Pancreas (tissue), 10 donors: ENCODE measurements at regions of chr11 and their contacts with region 1.

Region 1: GRCh38 chr11:117807482-117808327 is 10.7 kb upstream of the DSCAML1 start:
- DNase-seq: peak in 3 of 6 donors; percentile 75 to 93 (median 80)
- ATAC-seq: peak; percentile 50 to 89 (median 80)
- H3K4me3 ChIP-seq: no peak overlapping the region
- H3K27ac ChIP-seq: no peak overlapping the region
- H3K4me1 ChIP-seq: no peaks in the 10 kb centered on the region
- H3K27me3 ChIP-seq: no peaks in the 10 kb centered on the region
- CTCF ChIP-seq: peak; percentile 78 to 87 (median 85)

Region 2: DNA sequence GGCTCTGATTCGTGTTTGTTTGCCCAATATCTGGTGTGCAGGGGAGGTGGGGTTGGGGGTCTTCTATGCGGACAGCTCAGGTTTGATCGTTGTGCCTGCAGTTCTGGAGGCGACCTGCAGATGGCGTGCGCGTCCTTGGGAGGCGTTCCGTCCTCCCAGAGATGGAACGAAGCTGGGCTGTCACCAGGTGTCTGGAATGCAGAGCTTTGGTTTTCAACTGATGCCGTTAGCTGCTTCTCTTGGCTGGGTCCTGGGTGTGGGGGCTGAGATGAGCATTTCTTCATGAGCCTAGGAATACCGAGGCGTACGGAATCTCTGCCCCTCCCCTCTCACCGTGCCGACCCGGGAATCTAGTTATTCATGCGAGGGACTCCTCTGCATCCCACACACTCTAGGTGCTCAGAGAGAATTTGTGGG is 381.4 kb before region 1 on chr11:
- intact Hi-C with region 1: loop called in 1 of 3 experiments (anchors 10 kb)
- DNase-seq: peak in 5 of 6 donors; percentile 41 to 93 (median 70)
- ATAC-seq: peak; percentile 70 to 93 (median 86)
- H3K4me3 ChIP-seq: no peak overlapping the region
- H3K27ac ChIP-seq: no peak overlapping the region
- H3K4me1 ChIP-seq: no peaks in the 10 kb centered on the region
- H3K27me3 ChIP-seq: no peaks in the 10 kb centered on the region
- CTCF ChIP-seq: peak; percentile 76 to 93 (median 87)

Region 3: DNA sequence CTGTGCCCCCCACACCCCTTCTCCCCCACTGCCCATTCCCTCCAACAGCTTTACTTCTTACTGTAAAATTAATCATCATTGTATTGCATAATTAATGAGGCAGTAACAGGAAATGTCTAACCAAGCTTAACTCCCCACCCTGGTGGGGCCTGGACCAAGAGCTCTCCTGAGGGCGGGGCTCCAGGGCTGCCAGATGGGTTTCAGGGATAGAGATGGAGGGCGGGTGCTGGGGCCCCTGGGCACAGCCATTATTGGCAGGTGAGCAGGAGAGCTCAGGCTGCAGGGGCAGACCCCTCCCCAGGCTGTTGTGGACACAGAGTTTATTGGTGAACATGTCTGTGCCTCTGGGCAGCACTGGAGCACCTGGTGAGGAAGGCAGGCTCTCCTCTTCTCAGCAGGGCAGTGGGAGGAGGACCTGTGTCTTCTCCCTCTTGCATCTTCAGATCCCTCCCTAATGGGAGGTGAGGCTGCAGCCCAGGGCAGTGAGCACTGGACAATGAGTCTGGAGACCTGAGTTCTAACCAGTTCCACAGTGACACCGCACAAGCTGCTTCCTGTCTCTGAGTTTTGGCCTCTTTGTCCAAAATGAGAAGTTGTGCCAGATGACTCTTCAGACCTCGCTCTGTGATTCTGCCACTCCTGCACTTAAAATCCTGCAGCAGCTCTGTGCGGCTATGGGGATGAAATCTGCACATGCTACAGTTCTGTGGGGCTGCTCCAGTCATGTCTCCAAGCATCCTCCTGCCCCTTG is 246.8 kb before region 1 on chr11:
- intact Hi-C with region 1: no loop called
- DNase-seq: peak in 1 of 6 donors; percentile 38
- ATAC-seq: no peak
- H3K4me3 ChIP-seq: no peak overlapping the region
- H3K27ac ChIP-seq: no peak overlapping the region
- H3K4me1 ChIP-seq: no peaks in the 10 kb centered on the region
- H3K27me3 ChIP-seq: no peaks in the 10 kb centered on the region
- CTCF ChIP-seq: no peak

Region 4: DNA sequence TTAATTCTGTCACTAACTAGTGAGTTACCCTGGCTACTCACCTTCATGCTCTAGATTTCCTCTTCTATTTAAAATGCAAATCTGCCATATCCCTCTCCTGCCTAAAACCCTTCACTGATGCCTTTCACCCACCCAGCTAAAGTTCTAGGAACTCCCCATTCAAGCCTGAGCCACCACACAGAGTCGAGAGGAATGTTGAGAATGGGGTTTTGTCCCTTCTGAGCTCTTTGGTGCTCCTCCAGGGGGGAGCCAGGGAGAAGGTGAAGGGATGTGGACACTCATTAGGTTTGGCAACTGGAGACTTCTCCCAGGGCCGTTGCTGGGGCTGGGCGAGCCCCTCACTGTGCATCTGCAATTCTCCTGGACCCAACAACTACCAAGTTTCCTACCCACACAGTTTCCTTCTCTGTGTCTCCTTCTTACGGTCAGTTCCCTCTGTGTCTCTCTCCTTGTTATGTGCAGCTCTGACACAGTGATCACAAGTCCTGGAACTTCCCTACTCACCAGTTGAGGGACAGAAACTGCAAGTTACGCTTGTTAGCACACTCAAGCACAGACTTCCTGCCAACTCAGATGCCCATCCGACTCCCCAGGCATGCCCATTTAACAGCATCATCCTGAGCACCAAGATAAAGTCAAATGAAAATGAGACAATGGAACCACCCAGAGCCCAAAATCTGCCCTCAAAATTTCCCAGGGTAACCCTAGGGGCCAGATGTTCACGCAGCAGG is 171.9 kb after region 1 on chr11:
- intact Hi-C with region 1: no loop called
- DNase-seq: no peak
- ATAC-seq: peak in 2 of 4 donors; percentile 80 to 87
- H3K4me3 ChIP-seq: no peak overlapping the region
- H3K27ac ChIP-seq: no peak overlapping the region
- H3K4me1 ChIP-seq: no peaks in the 10 kb centered on the region
- H3K27me3 ChIP-seq: no peaks in the 10 kb centered on the region
- CTCF ChIP-seq: no peak

Region 5: GRCh38 chr11:118058311-118059245 is 250.9 kb after region 1 on chr11:
- intact Hi-C with region 1: loop called in 2 of 3 experiments (anchors 5 kb)
- DNase-seq: peak in 1 of 6 donors; percentile 47
- ATAC-seq: no peak
- H3K4me3 ChIP-seq: no peak overlapping the region
- H3K27ac ChIP-seq: no peak overlapping the region
- H3K4me1 ChIP-seq: no peaks in the 10 kb centered on the region
- H3K27me3 ChIP-seq: no peaks in the 10 kb centered on the region
- CTCF ChIP-seq: no peak